IMR-90 (cell line): ENCODE measurements at regions of chr2 and their contacts with region 1.

Region 1: GRCh38 chr2:62577994-62578781 is 72.2 kb upstream of the TMEM17 start:
- DNase-seq: peak; percentile 92
- ATAC-seq: peak; percentile 51
- H3K4me3 ChIP-seq: no peak overlapping the region
- H3K27ac ChIP-seq: peak overlapping the region; percentile 90
- H3K4me1 ChIP-seq: peaks cover 22% of the 10 kb centered on the region
- H3K27me3 ChIP-seq: no peaks in the 10 kb centered on the region
- CTCF ChIP-seq: no peak
- POLR2A ChIP-seq: no peak
- RAD21 ChIP-seq: no peak

Region 2: GRCh38 chr2:62705007-62705829 is 127.0 kb after region 1 on chr2 and contains the start of gene EHBP1:
- CTCF ChIA-PET with region 1: no interaction called
- POLR2A ChIA-PET with region 1: no interaction called
- dilution Hi-C with region 1: no loop called
- in situ Hi-C with region 1: no loop called
- intact Hi-C with region 1: loop called (anchors 2 kb)
- DNase-seq: peak; percentile 100
- ATAC-seq: peak; percentile 96
- H3K4me3 ChIP-seq: peak within 1 kb of the TSS; percentile 83
- H3K27ac ChIP-seq: peak within 1 kb of the TSS; percentile 84
- H3K4me1 ChIP-seq: peaks cover 4% of the 10 kb centered on the region; the same call in 1 of the 2 replicates
- H3K27me3 ChIP-seq: no peaks in the 10 kb centered on the region
- CTCF ChIP-seq: no peak
- POLR2A ChIP-seq: 0 out of 2 replicates have a peak, but pooled peaks have one; percentile 37
- RAD21 ChIP-seq: no peak; the same call in 1 of the 2 replicates
- total RNA-seq, gene EHBP1: 44.4 and 55.0 TPM in 2 replicates

Region 3: GRCh38 chr2:62768615-62769014 is 190.4 kb after region 1 on chr2:
- CTCF ChIA-PET with region 1: no interaction called
- POLR2A ChIA-PET with region 1: no interaction called
- dilution Hi-C with region 1: no loop called
- in situ Hi-C with region 1: no loop called
- intact Hi-C with region 1: loop called (anchors 5 kb)
- DNase-seq: peak; percentile 27
- ATAC-seq: no peak
- H3K4me3 ChIP-seq: no peak overlapping the region
- H3K27ac ChIP-seq: no peak overlapping the region
- H3K4me1 ChIP-seq: no peaks in the 10 kb centered on the region
- H3K27me3 ChIP-seq: no peaks in the 10 kb centered on the region
- CTCF ChIP-seq: no peak
- POLR2A ChIP-seq: no peak
- RAD21 ChIP-seq: no peak